IMR-90 (cell line): ENCODE measurements at regions of chr5 and their contacts with region 1.

Region 1: GRCh38 chr5:42889311-42889933 is 77.7 kb upstream of the SELENOP start:
- DNase-seq: peak; percentile 61
- ATAC-seq: peak; percentile 87
- H3K4me3 ChIP-seq: no peak overlapping the region
- H3K27ac ChIP-seq: no peak overlapping the region
- H3K4me1 ChIP-seq: no peaks in the 10 kb centered on the region; the same call in 1 of the 2 replicates
- H3K27me3 ChIP-seq: peaks cover 9% of the 10 kb centered on the region
- CTCF ChIP-seq: peak; percentile 75
- POLR2A ChIP-seq: no peak
- RAD21 ChIP-seq: peak; percentile 74

Region 2: DNA sequence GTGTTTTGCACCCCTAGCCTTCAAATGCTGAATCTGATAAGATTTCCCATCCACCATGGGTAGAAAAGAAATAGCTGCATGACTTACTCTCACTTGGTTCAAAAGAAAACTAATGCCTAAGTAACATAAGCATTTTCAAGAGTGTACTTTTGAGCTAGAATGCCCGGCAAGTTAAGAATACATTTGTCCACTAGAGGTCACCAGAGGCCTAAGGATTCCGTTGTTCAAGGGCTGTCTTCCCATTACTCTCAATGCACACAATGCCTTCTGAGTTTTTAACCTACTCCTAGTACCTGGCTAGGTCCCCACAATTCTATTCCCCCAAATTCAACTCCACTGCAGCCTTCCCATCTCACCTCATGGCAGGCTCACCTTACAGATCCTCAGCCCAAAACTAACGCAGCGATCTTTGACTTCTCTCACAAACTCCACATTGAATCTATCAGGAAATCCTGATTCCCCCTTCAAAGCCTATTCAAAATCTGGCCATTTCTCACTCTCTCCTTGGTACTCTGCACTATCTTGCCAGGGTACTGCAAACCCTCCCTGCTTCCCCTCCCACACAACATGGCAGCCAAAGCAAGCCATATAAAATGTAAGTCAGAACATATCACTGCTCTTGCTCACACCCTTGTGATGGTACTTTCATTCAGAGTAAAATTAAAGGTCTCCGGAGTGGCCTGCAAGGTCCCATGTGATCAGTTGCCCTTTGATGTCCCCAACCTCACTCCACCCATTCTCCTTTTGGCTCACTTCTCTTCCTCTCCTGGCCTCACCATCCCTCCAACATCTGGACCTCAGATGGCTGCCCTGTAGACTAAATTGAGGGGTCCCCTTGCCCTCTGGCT is 1032.6 kb before region 1 on chr5:
- CTCF ChIA-PET with region 1: no interaction called
- POLR2A ChIA-PET with region 1: no interaction called
- dilution Hi-C with region 1: no loop called
- in situ Hi-C with region 1: no loop called
- intact Hi-C with region 1: loop called (anchors 5 kb)
- DNase-seq: peak; percentile 73
- ATAC-seq: peak; percentile 96
- H3K4me3 ChIP-seq: no peak overlapping the region
- H3K27ac ChIP-seq: no peak overlapping the region
- H3K4me1 ChIP-seq: no peaks in the 10 kb centered on the region
- H3K27me3 ChIP-seq: no peaks in the 10 kb centered on the region
- CTCF ChIP-seq: peak; percentile 85
- POLR2A ChIP-seq: no peak
- RAD21 ChIP-seq: peak; percentile 88

Region 3: DNA sequence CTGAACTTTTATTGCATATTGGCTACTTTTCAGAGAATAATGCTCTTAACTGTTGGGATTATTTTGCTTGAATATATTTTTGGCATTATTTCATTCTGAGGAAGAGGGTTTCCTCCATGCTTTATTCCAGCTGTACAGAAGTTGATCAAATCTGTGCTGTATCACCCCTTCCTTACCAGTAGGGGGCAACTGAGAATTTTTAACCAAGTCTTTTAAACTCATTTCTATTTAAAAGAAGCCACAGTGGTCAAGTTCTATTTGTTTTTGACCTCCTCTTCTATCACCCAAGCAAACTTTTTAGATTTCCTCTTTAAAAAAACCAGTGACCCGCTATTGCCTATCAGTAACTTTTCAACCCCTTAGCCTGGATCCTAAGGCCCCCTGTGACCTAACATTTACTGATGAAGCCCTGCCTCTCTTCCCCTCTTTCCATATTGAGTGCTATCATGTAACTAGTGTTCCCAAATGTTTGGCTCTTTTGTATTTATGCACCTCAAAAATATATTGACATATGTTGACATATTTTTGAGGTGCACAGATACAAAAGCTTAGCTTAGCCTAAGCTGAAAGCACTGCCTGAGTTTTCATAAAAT is 883.8 kb before region 1 on chr5:
- CTCF ChIA-PET with region 1: no interaction called
- POLR2A ChIA-PET with region 1: no interaction called
- dilution Hi-C with region 1: no loop called
- in situ Hi-C with region 1: no loop called
- intact Hi-C with region 1: loop called (anchors 2 kb)
- DNase-seq: peak; percentile 24
- ATAC-seq: peak; percentile 64; the same call in 1 of the 2 replicates
- H3K4me3 ChIP-seq: no peak overlapping the region
- H3K27ac ChIP-seq: no peak overlapping the region
- H3K4me1 ChIP-seq: no peaks in the 10 kb centered on the region
- H3K27me3 ChIP-seq: no peaks in the 10 kb centered on the region
- CTCF ChIP-seq: peak; percentile 64
- POLR2A ChIP-seq: no peak
- RAD21 ChIP-seq: no peak

Region 4: DNA sequence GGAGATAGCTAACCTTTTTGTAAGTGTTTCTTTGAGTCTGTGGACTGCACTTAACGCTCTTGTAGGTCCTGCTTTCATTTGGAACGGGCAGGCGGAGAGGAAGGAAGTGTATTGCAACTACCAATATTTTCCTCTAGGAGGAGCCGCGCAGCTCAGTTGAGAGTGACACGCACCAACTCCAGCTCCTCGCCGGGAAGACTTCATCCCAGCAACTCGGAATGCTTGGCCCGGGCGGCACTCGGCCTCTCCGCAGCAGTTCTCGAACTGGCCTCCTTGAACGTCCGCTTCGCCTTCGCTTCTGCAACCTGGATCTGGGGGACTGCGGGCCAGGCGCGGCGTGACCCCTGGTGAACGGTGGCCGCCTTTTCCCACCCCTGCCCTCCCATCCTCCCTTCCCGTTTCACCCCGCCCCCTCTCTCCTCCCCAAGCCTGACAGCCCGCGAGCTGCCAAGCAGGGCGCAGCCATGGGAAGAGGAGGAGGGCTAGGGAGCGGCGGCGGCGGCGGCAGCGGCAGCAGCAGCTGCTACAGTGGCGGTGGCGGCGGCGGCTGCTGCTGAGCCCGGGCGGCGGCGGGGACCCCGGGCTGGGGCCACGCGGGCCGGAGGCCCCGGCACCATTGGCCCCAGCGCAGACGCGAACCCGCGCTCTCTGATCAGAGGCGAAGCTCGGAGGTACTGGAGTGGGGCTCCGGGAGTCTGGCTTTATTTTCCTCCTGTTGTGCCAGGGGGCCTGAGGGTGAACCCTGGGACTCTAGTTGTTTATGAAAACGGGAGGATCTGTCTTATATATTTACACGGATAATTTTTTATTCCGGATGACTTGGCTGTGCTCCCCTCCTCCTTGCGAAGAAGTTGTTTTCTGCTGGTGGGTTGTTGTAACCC is 465.9 kb before region 1 on chr5 and contains the start of gene GHR:
- CTCF ChIA-PET with region 1: no interaction called
- POLR2A ChIA-PET with region 1: no interaction called
- dilution Hi-C with region 1: no loop called
- in situ Hi-C with region 1: no loop called
- intact Hi-C with region 1: loop called (anchors 5 kb)
- DNase-seq: peak; percentile 88
- ATAC-seq: peak; percentile 98
- H3K4me3 ChIP-seq: peak within 1 kb of the TSS; percentile 63
- H3K27ac ChIP-seq: peak within 1 kb of the TSS; percentile 47
- H3K4me1 ChIP-seq: no peaks in the 10 kb centered on the region
- H3K27me3 ChIP-seq: no peaks in the 10 kb centered on the region
- CTCF ChIP-seq: peak; percentile 84
- POLR2A ChIP-seq: no peak
- RAD21 ChIP-seq: peak; percentile 57
- total RNA-seq, gene GHR: 1.1 TPM in 2 replicates

Region 5: GRCh38 chr5:42583322-42583721 is 306.1 kb before region 1 on chr5:
- CTCF ChIA-PET with region 1: no interaction called
- POLR2A ChIA-PET with region 1: no interaction called
- dilution Hi-C with region 1: no loop called
- in situ Hi-C with region 1: no loop called
- intact Hi-C with region 1: loop called (anchors 5 kb)
- DNase-seq: peak; percentile 38
- ATAC-seq: peak; percentile 48; the same call in 1 of the 2 replicates
- H3K4me3 ChIP-seq: no peak overlapping the region
- H3K27ac ChIP-seq: no peak overlapping the region
- H3K4me1 ChIP-seq: no peaks in the 10 kb centered on the region
- H3K27me3 ChIP-seq: no peaks in the 10 kb centered on the region
- CTCF ChIP-seq: peak; percentile 67
- POLR2A ChIP-seq: no peak
- RAD21 ChIP-seq: peak; percentile 49

Region 6: GRCh38 chr5:42767491-42768105 is 121.8 kb before region 1 on chr5:
- CTCF ChIA-PET with region 1: interaction called, 3 read pairs
- POLR2A ChIA-PET with region 1: no interaction called
- dilution Hi-C with region 1: no loop called
- in situ Hi-C with region 1: no loop called
- intact Hi-C with region 1: loop called (anchors 10 kb)
- DNase-seq: peak; percentile 13
- ATAC-seq: peak; percentile 61; the same call in 1 of the 2 replicates
- H3K4me3 ChIP-seq: no peak overlapping the region
- H3K27ac ChIP-seq: no peak overlapping the region
- H3K4me1 ChIP-seq: no peaks in the 10 kb centered on the region
- H3K27me3 ChIP-seq: no peaks in the 10 kb centered on the region
- CTCF ChIP-seq: peak; percentile 53
- POLR2A ChIP-seq: no peak
- RAD21 ChIP-seq: peak; percentile 50

Region 7: GRCh38 chr5:42879291-42879690 is 10.1 kb before region 1 on chr5:
- CTCF ChIA-PET with region 1: interaction called, 14 read pairs
- POLR2A ChIA-PET with region 1: no interaction called
- dilution Hi-C with region 1: no loop called
- in situ Hi-C with region 1: no loop called
- intact Hi-C with region 1: no loop called
- DNase-seq: no peak
- ATAC-seq: no peak
- H3K4me3 ChIP-seq: no peak overlapping the region
- H3K27ac ChIP-seq: no peak overlapping the region
- H3K4me1 ChIP-seq: no peaks in the 10 kb centered on the region
- H3K27me3 ChIP-seq: peaks cover 5% of the 10 kb centered on the region
- CTCF ChIP-seq: no peak
- POLR2A ChIP-seq: no peak
- RAD21 ChIP-seq: no peak